Caco-2 (cell line): ENCODE measurements at regions of chr1 and their contacts with region 1.

Region 1: DNA sequence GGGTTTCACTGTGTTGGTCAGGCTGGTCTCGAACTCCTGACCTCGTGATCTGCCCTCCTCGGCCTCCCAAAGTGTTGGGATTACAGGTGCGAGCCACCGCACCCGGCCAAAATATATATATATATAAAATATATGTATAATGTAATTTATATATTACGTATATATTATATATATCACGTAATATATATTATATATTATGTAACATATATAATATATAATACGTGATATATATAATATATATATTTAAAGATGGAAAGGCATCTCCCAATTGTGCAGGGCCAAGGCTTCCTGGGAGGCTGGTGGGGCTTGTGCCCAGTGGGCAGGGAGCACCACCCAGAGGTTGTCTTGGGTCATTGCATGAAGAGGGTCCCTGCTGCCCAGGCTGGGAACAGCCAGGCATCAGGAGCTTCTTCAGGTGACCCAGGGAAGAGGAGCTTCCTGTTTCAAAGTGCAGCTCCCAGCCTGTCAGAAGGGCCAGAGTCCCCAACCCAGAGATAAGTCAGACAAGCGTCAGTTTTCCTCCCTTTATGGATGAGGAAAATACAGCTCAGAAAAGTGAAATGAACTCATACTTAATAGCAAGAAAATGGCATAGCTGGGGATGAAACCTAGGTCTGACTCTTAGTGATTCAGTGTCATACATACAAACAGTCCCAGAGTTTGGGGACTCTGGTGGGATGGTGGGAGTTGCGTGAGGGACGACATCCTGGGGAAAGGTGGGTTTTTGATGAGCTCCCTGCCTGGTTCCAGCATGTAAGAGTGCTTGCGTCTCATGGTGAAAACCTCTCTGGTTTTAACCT is 12.0 kb downstream of the UBE2Q1 start:
- DNase-seq: peak; percentile 73 to 80
- H3K4me3 ChIP-seq: no peak overlapping the region
- H3K4me3 Mint-ChIP-seq: no peak overlapping the region
- H3K27ac Mint-ChIP-seq: no peak overlapping the region
- H3K4me1 ChIP-seq: no peaks in the 10 kb centered on the region
- H3K4me1 Mint-ChIP-seq: peaks cover 9% of the 10 kb centered on the region
- H3K27me3 ChIP-seq: no peaks in the 10 kb centered on the region
- H3K27me3 Mint-ChIP-seq: peaks cover 7% of the 10 kb centered on the region
- CTCF ChIP-seq: peak; percentile 70 to 83

Region 2: GRCh38 chr1:154533952-154534844 is 12.3 kb before region 1 on chr1:
- CTCF ChIA-PET with region 1: interaction called, 13 read pairs
- POLR2A ChIA-PET with region 1: no interaction called
- intact Hi-C with region 1: no loop called
- DNase-seq: peak; percentile 67 to 73
- H3K4me3 ChIP-seq: no peak overlapping the region
- H3K4me3 Mint-ChIP-seq: no peak overlapping the region
- H3K27ac Mint-ChIP-seq: no peak overlapping the region
- H3K4me1 ChIP-seq: no peaks in the 10 kb centered on the region
- H3K4me1 Mint-ChIP-seq: no peaks in the 10 kb centered on the region
- H3K27me3 ChIP-seq: no peaks in the 10 kb centered on the region
- H3K27me3 Mint-ChIP-seq: peaks cover 10% of the 10 kb centered on the region
- CTCF ChIP-seq: peak; percentile 75 to 81